Colonic mucosa (tissue), 4 donors: ENCODE measurements at regions of chr4 and their contacts with region 1.

Region 1: DNA sequence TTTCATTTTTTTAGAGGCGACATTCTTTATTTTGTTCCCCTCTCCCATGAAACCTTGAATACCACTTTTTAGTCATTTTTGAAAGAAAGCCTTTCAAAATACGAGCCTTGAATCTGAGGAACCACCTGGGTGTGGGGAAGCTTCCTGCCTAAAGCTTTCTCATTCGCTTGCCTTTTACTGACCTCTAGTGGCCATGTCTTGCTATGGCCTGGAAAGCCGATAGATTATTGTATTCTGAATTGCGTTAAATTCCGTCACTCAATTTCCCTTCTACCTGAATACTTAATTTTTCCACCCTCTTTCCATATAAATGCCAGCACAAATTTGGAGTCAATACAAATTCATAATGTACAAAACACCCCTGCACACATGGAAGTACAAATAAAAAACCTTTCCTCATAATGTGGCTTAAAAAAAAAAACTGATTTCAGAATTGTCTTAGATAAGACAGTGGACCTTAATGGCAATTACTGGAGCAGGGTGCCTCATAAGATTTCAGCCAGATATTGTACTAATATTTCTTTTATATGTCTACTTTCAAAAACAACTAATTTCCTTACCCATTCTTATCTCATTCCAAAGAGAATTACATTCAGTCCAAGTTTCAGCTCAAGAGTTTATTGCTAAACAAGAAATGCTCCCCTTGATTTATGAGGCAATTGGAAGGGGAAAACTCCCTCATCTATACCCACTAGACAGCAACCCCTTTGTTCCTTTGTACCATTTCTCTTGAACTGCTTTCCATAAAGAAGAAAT is 217.9 kb downstream of the CENPC start:
- DNase-seq: peak; percentile 58
- H3K4me3 ChIP-seq: no peak overlapping the region
- H3K27ac ChIP-seq: no peak overlapping the region
- H3K4me1 ChIP-seq: no peaks in the 10 kb centered on the region
- H3K27me3 ChIP-seq: no peaks in the 10 kb centered on the region
- CTCF ChIP-seq: peak; percentile 87

Region 2: DNA sequence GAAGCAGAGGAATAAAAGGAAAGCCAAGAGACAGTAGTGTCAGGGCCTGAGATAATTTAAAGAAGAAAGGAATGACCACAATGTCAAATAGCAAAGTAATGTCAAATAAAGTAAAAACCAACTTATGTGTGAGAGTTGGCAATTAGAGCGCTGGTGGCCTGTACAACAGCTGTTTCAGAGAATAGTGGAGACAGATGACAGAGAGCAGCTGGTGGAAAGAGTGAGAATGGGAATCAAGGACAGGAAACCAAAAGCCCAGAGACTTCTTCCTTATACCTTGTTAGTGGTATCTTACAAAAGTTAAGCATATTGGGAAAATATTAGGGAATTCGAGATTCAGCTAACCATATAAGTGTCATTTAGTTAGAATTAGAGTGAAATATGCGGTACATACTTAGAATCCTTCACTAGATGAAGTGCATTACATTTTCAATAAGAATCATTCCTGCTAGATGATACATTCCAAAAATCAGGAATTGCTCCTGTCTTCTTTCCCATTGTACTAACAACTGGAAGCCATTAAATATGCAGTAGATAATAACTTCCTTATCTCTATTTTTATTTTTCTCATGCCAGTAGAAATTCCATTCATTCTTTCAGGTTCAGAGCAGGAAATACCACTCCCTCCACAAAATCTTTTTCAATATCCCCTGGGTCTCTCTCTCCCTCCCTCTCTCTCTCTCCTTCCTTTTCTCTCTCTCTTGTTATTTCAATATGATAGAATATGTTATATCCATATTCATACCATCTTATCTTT is 307.6 kb before region 1 on chr4:
- intact Hi-C with region 1: no loop called
- DNase-seq: no peak
- H3K4me3 ChIP-seq: no peak overlapping the region
- H3K27ac ChIP-seq: no peak overlapping the region
- H3K4me1 ChIP-seq: no peaks in the 10 kb centered on the region
- H3K27me3 ChIP-seq: no peaks in the 10 kb centered on the region
- CTCF ChIP-seq: no peak

Region 3: GRCh38 chr4:67035501-67035900 is 291.9 kb before region 1 on chr4:
- intact Hi-C with region 1: no loop called
- DNase-seq: no peak
- H3K4me3 ChIP-seq: no peak overlapping the region
- H3K27ac ChIP-seq: no peak overlapping the region
- H3K4me1 ChIP-seq: no peaks in the 10 kb centered on the region
- H3K27me3 ChIP-seq: no peaks in the 10 kb centered on the region
- CTCF ChIP-seq: no peak

Region 4: GRCh38 chr4:67087897-67088296 is 239.5 kb before region 1 on chr4:
- intact Hi-C with region 1: loop called (anchors 10 kb)
- DNase-seq: peak; percentile 45
- H3K4me3 ChIP-seq: no peak overlapping the region
- H3K27ac ChIP-seq: no peak overlapping the region
- H3K4me1 ChIP-seq: no peaks in the 10 kb centered on the region
- H3K27me3 ChIP-seq: no peaks in the 10 kb centered on the region
- CTCF ChIP-seq: peak; percentile 53